Caco-2 (cell line): ENCODE measurements at regions of chr7 and their contacts with region 1.

Region 1: GRCh38 chr7:152959610-152960009 is 200.1 kb downstream of the ACTR3B start:
- DNase-seq: no peak
- H3K4me3 ChIP-seq: no peak overlapping the region
- H3K4me3 Mint-ChIP-seq: no peak overlapping the region
- H3K27ac Mint-ChIP-seq: no peak overlapping the region
- H3K4me1 ChIP-seq: no peaks in the 10 kb centered on the region
- H3K4me1 Mint-ChIP-seq: no peaks in the 10 kb centered on the region
- H3K27me3 ChIP-seq: no peaks in the 10 kb centered on the region
- H3K27me3 Mint-ChIP-seq: no peaks in the 10 kb centered on the region
- CTCF ChIP-seq: no peak

Region 2: DNA sequence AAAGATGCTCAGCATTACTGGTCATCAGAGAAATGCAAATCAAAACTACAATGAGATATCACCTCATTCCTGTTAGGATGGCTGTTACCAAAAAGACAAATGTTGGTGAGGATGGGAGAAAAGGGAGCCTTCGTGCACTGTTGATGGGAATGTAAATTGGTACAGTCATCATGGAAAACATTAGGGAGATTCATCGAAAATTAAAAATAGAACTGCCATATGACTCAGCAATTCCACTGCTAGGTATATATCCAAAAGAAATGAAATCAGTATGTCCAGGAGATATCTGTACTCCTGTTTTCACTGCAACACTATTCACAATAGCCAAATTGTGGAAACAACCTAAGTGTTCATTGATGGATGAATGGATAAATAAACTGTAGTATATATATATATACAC is 28.0 kb after region 1 on chr7:
- CTCF ChIA-PET with region 1: no interaction called
- POLR2A ChIA-PET with region 1: no interaction called
- intact Hi-C with region 1: loop called (anchors 1 kb)
- DNase-seq: no peak
- H3K4me3 ChIP-seq: no peak overlapping the region
- H3K4me3 Mint-ChIP-seq: no peak overlapping the region
- H3K27ac Mint-ChIP-seq: no peak overlapping the region
- H3K4me1 ChIP-seq: peaks cover 9% of the 10 kb centered on the region; the same call in 1 of the 2 replicates
- H3K4me1 Mint-ChIP-seq: peaks cover 7% of the 10 kb centered on the region
- H3K27me3 ChIP-seq: no peaks in the 10 kb centered on the region
- H3K27me3 Mint-ChIP-seq: no peaks in the 10 kb centered on the region
- CTCF ChIP-seq: no peak

Region 3: DNA sequence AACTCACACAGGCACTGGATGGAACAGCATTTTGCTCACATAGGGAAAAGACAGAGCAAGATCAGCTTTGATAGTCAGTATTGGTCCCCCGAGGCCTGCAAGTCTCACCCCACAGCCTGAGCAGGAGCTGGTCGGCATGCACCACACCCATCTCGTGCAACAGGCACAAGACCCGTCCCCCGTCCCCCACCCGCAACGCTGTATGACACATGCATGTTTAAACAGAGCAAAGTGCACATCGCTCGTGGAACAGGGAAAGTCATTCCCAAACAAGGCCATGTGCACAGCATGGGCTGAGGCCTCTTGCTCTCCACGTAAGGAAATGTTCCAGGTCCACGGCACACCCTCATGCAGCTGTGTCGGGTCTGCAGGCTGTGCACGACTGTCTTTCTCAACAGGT is 327.2 kb after region 1 on chr7:
- CTCF ChIA-PET with region 1: no interaction called
- POLR2A ChIA-PET with region 1: no interaction called
- intact Hi-C with region 1: no loop called
- DNase-seq: peak; percentile 5 to 55
- H3K4me3 ChIP-seq: no peak overlapping the region
- H3K4me3 Mint-ChIP-seq: no peak overlapping the region
- H3K27ac Mint-ChIP-seq: no peak overlapping the region
- H3K4me1 ChIP-seq: no peaks in the 10 kb centered on the region
- H3K4me1 Mint-ChIP-seq: no peaks in the 10 kb centered on the region
- H3K27me3 ChIP-seq: no peaks in the 10 kb centered on the region
- H3K27me3 Mint-ChIP-seq: no peaks in the 10 kb centered on the region
- CTCF ChIP-seq: no peak